ENCODE measurements at regions of chr4 and their contacts with region 1.

Region 1: GRCh38 chr4:3480528-3481112 is 17.5 kb downstream of the DOK7 start:
- DNase-seq: peak in 1 of 2 donors; percentile 91
- H3K4me3 ChIP-seq: no peak overlapping the region
- H3K27ac ChIP-seq: peak overlapping the region; percentile 95 to 96
- H3K4me1 ChIP-seq: peaks cover 6 to 24% of the 10 kb centered on the region in 2 donors
- H3K27me3 ChIP-seq: no peaks in the 10 kb centered on the region
- CTCF ChIP-seq: peak; percentile 93 to 100 (median 100)

Region 2: GRCh38 chr4:3292571-3293400 is 187.8 kb before region 1 on chr4 and contains the start of gene RGS12:
- intact Hi-C with region 1: loop called (anchors 5 kb)
- DNase-seq: peak; percentile 86 to 96
- H3K4me3 ChIP-seq: peak within 1 kb of the TSS; percentile 76 to 96
- H3K27ac ChIP-seq: peak within 1 kb of the TSS; percentile 90 to 98
- H3K4me1 ChIP-seq: peaks cover 5 to 11% of the 10 kb centered on the region in 2 donors
- H3K27me3 ChIP-seq: peaks cover 6% of the 10 kb centered on the region
- CTCF ChIP-seq: no peak
- total RNA-seq, gene RGS12: 26.3 TPM

Region 3: DNA sequence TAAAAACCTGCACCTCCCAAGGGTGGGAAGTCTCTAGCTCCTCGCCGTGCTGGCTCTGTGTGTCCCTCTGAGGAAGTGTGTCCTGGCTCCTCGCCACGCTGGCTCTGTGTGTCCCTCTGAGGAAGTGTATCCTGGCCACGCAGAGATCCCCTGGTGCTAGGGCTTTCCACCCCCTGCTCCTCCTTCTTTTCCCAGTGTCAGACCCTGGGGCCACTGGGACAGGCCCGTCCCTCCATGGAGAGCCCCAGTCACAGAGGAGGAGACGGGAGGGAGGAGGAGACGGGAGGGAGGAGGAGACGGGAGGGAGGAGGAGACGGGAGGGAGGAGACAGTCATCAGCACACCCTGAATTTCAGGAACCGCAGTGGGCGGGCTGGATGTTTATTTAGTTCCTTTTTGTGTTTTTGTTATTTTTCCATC is 92.7 kb before region 1 on chr4:
- intact Hi-C with region 1: loop called (anchors 1 kb)
- DNase-seq: peak; percentile 77 to 92
- H3K4me3 ChIP-seq: peak overlapping the region; percentile 41 to 61
- H3K27ac ChIP-seq: peak overlapping the region; percentile 86 to 89
- H3K4me1 ChIP-seq: peaks cover 4 to 17% of the 10 kb centered on the region in 2 donors
- H3K27me3 ChIP-seq: no peaks in the 10 kb centered on the region
- CTCF ChIP-seq: no peak

Region 4: DNA sequence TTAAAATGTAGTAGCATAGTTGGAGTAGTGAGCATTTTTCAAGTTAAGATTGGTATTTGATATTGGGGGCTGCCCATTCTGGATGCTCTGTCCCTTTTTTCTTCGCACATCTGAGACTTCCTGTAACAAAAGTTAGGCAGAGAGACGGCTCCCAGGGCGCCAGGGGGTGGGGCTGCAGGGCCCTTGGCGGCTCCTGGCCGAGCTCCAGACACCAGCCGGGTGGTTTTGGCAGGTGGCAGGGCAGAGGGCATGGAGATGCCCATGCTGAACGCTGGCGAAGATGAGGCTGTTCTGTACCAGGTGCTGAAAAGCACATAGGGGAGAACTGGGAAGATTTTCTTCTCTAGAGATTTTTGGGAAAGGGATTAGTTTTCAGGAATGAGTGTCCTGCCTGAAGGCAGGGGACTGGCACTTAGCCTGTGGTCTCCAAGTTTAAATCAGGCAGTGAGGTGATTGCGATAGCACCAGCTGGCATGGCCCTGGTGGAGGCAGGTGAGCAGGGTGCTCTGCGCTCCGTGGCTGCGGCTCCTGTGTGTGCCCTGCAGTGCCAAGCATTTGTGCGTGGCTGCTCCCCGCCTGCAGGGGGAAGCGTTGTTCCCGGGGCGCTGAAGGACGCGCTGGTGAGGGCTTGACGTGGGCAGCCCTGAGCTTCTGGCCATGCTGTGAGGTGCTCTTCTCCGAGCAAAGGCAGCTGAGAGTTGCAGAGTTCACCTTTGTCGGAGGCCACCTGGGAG is 62.4 kb before region 1 on chr4:
- intact Hi-C with region 1: no loop called
- DNase-seq: no peak
- H3K4me3 ChIP-seq: no peak overlapping the region
- H3K27ac ChIP-seq: no peak overlapping the region
- H3K4me1 ChIP-seq: no peaks in the 10 kb centered on the region
- H3K27me3 ChIP-seq: no peaks in the 10 kb centered on the region
- CTCF ChIP-seq: no peak

Region 5: DNA sequence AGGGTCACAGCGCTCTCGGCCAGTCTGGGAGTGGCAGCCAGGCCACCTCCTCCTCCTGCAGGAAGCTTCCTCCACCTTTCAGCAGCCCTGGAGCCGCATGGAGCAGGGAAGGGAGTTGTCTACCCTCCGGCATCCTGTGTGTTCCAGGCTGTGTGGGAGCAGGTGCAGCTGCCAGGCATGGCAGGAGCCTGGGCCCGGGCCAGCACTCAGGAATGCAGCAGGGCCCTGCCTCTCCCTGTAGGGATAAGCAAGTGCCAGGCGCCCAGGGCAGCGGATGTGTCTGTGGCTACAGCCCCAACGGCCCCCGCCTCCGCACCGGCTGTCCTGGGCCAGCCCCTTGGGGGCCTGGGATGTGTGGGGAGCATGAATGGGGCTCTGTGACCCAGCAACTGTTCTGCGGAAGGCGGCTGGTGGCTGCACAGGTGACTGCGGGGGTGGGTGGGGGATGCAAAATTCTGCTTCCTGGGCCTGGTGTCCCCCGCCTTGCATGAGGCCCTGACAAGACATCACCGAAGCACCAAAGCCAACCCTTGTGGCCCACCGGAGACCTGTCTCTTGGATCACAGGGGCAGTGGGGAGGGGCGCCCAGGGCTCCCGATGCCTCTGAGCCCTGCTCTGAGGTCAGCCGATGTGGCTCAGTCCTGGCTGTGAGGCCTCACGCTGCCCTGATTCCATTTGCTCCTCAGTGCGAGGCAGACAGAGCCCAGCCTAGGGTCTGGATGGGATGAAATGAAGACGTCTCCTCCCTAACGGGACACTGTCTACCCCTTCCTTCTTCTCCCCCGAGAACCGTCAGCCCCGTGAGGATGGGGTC is 18.9 kb before region 1 on chr4:
- intact Hi-C with region 1: loop called (anchors 1 kb)
- DNase-seq: peak in 1 of 2 donors; percentile 90
- H3K4me3 ChIP-seq: no peak overlapping the region
- H3K27ac ChIP-seq: peak overlapping the region; percentile 54 to 88
- H3K4me1 ChIP-seq: peaks cover 10 to 25% of the 10 kb centered on the region in 2 donors
- H3K27me3 ChIP-seq: no peaks in the 10 kb centered on the region
- CTCF ChIP-seq: no peak

Region 6: GRCh38 chr4:3657902-3658529 is 177.4 kb after region 1 on chr4:
- intact Hi-C with region 1: loop called (anchors 1 kb)
- DNase-seq: peak; percentile 75 to 96
- H3K4me3 ChIP-seq: peak overlapping the region in 1 of 2 donors; percentile 44
- H3K27ac ChIP-seq: peak overlapping the region; percentile 92 to 97
- H3K4me1 ChIP-seq: peaks cover 6 to 22% of the 10 kb centered on the region in 2 donors
- H3K27me3 ChIP-seq: no peaks in the 10 kb centered on the region
- CTCF ChIP-seq: no peak

Region 7: DNA sequence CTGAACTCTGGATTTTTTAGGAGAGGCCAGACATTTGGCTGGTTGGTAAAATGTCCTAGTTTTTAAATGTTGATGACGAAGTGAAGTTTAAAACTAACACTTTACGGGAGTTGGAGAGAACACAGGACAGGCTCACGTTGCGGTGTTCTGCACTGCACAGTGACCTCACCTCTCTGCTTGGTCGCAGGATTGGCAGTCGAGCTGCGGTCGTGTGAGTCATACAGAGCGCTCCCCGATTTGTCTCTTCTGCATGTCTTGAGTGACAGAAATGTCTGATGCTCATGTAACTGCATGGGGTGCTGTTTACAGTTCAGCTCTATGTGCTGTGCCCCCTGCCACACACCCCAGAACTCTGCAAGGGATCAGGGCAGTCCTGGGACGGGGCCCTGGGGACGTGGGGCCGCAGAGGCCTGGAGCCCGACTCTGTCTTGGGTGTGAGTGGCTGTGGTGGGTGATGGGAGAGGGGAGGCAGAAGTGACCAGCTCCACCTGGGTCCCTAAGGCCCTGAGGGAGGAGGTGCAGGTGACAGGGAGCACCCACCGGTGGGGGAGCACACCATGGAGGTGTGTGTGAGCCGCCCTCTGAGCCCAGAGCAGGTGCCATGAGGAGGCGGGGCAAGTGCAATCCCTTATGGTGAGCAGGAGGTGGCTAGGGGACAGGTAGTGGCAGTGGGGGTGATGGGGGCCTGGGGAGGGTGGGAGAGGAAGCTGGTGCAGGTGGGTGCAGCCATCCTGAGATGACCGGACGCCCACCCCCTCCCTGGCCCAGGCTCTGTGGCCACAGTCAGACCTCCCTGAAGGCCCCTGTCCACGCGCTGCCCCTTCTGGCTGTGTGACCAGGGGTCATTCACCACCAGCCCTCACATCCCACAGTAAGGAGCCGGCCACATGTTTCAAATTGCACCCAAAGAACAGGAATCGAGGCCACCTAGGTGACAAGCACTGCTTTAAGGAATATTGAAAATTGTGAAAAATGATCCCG is 207.7 kb after region 1 on chr4:
- intact Hi-C with region 1: no loop called
- DNase-seq: peak in 1 of 2 donors; percentile 55
- H3K4me3 ChIP-seq: no peak overlapping the region
- H3K27ac ChIP-seq: no peak overlapping the region
- H3K4me1 ChIP-seq: no peaks in the 10 kb centered on the region
- H3K27me3 ChIP-seq: no peaks in the 10 kb centered on the region
- CTCF ChIP-seq: no peak

Region 8: GRCh38 chr4:3945511-3946290 is 465.1 kb after region 1 on chr4:
- intact Hi-C with region 1: loop called (anchors 5 kb)
- DNase-seq: no peak
- H3K4me3 ChIP-seq: no peak overlapping the region
- H3K27ac ChIP-seq: no peak overlapping the region
- H3K4me1 ChIP-seq: no peaks in the 10 kb centered on the region
- H3K27me3 ChIP-seq: no peaks in the 10 kb centered on the region
- CTCF ChIP-seq: no peak